ENCODE measurements at regions of chr10 and their contacts with region 1.

Region 1: DNA sequence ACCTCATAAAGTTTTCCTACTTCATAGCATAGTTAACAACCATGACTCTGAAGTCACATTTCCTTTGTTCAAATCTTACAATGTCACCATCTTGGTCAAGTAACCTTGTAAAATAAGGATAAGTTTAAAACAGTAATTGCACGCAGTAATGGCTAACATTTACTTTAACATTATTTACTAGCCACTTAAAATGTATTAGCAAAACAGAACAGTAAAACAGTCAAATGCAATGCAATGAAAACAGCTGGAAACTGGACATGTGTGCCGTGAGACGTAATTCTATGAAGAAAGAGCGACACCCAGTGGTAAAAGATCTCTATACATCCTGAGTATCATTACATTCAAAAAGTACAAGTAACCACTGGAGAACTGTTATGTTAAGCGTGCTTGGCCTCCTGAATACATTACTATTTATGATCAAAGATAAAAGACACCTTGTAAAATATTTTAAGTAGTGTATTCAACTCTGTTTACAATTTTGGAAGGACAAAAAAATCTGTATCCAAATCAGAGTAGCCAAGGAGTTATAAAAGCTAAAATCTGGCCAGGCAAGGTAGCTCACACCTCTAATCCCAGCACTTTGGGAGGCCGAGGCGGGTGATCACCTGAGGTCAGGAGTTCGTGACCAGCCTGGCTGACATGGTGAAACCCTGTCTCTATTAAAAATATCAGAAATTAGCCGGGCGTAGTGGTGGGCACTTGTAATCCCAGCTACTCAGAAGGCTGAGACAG is 27.2 kb downstream of the ATE1 start:
- DNase-seq: peak; percentile 65
- H3K4me3 ChIP-seq: no peak overlapping the region
- H3K27ac ChIP-seq: no peak overlapping the region
- H3K4me1 ChIP-seq: no peaks in the 10 kb centered on the region; a peak in 2 of 4 replicates
- H3K27me3 ChIP-seq: no peaks in the 10 kb centered on the region
- CTCF ChIP-seq: peak; percentile 87
- EP300 ChIP-seq: no peak
- RAD21 ChIP-seq: peak; percentile 84

Region 2: GRCh38 chr10:120942806-120943413 is 957.7 kb before region 1 on chr10:
- CTCF ChIA-PET with region 1: interaction called, 13 read pairs
- POLR2A ChIA-PET with region 1: no interaction called
- DNase-seq: peak; percentile 86
- H3K4me3 ChIP-seq: peak overlapping the region in 1 of 2 experiments; percentile 31; a peak in 1 of 4 replicates
- H3K27ac ChIP-seq: no peak overlapping the region
- H3K4me1 ChIP-seq: peaks cover 0 to 3% of the 10 kb centered on the region in 2 experiments; a peak in 1 of 4 replicates
- H3K27me3 ChIP-seq: no peaks in the 10 kb centered on the region
- CTCF ChIP-seq: peak; percentile 87
- EP300 ChIP-seq: no peak
- RAD21 ChIP-seq: peak; percentile 95

Region 3: DNA sequence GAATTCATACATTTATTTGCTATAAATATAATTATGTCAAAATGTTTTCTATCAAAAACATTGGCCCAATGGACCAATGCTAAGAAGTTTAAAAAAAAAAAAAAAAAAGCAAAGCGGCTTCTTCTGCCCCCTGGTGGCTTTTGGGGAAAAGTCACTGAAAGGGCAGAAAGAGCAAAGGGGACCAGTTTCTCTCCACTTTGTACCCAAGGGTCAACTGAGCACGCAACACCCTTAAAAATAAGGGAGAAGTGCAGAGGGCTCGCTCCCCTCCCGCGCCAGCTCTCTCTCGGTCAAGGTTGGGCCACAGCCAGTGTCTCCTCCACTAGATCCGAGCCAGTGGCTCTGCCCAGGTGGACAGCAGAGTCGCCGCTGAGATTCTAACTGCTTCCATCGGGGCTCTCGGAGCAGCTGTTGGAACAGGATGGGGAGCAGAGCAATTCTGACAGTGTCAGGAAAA is 166.0 kb before region 1 on chr10:
- CTCF ChIA-PET with region 1: interaction called, 17 read pairs
- POLR2A ChIA-PET with region 1: no interaction called
- DNase-seq: peak; percentile 70
- H3K4me3 ChIP-seq: no peak overlapping the region
- H3K27ac ChIP-seq: no peak overlapping the region
- H3K4me1 ChIP-seq: peaks cover 0 to 19% of the 10 kb centered on the region in 2 experiments; a peak in 2 of 4 replicates
- H3K27me3 ChIP-seq: no peaks in the 10 kb centered on the region
- CTCF ChIP-seq: peak; percentile 88
- EP300 ChIP-seq: no peak
- RAD21 ChIP-seq: peak; percentile 77

Region 4: GRCh38 chr10:121823993-121824463 is 76.6 kb before region 1 on chr10:
- CTCF ChIA-PET with region 1: interaction called, 17 read pairs
- POLR2A ChIA-PET with region 1: no interaction called
- DNase-seq: peak; percentile 47
- H3K4me3 ChIP-seq: peak overlapping the region in 1 of 2 experiments; percentile 27; a peak in 1 of 4 replicates
- H3K27ac ChIP-seq: no peak overlapping the region
- H3K4me1 ChIP-seq: no peaks in the 10 kb centered on the region
- H3K27me3 ChIP-seq: no peaks in the 10 kb centered on the region
- CTCF ChIP-seq: peak; percentile 82
- EP300 ChIP-seq: no peak
- RAD21 ChIP-seq: peak; percentile 54

Region 5: DNA sequence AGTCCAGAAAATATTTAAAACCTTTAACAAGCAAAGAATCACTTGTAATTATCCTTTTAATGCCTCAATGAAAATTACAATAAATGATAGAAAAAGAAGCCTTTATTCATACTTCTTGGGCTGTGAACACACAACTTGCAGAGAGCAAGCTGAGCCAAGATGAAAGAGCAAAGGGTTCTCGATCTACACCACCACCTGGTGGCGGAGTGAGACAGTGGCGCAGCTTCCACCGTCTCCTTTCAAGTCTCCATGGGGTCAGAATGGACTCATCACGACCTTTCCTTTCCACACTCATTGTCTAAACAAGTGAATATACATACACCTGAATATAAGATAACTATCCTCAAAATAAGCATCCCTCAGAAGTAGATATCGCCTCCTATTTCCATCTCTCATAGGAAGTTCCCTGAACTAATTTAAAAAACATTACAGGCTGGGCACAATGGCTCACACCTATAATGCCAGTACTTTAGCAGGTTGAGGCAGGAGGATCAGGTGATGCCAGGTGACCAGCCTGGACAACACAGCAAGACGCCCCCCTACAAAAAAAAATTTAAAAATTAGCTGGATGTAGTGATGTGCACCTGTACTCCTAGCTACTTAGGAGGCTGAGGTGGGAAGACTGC is 13.5 kb before region 1 on chr10:
- CTCF ChIA-PET with region 1: interaction called, 80 read pairs
- POLR2A ChIA-PET with region 1: no interaction called
- DNase-seq: peak; percentile 69
- H3K4me3 ChIP-seq: no peak overlapping the region; a peak in 1 of 4 replicates
- H3K27ac ChIP-seq: no peak overlapping the region
- H3K4me1 ChIP-seq: peaks cover 0 to 3% of the 10 kb centered on the region in 2 experiments; a peak in 1 of 4 replicates
- H3K27me3 ChIP-seq: no peaks in the 10 kb centered on the region
- CTCF ChIP-seq: peak; percentile 70
- EP300 ChIP-seq: no peak
- RAD21 ChIP-seq: peak; percentile 75

Region 6: GRCh38 chr10:121921238-121921931 is 20.8 kb after region 1 on chr10:
- CTCF ChIA-PET with region 1: interaction called, 32 read pairs
- POLR2A ChIA-PET with region 1: no interaction called
- DNase-seq: peak; percentile 60
- H3K4me3 ChIP-seq: no peak overlapping the region
- H3K27ac ChIP-seq: peak overlapping the region; percentile 26 to 96
- H3K4me1 ChIP-seq: peaks cover 0 to 15% of the 10 kb centered on the region in 2 experiments; a peak in 2 of 4 replicates
- H3K27me3 ChIP-seq: no peaks in the 10 kb centered on the region
- CTCF ChIP-seq: no peak
- EP300 ChIP-seq: peak in 1 of 2 experiments; percentile 49; a peak in 1 of 4 replicates
- RAD21 ChIP-seq: no peak